HepG2 (cell line): ENCODE measurements at regions of chr7 and their contacts with region 1.

Region 1: GRCh38 chr7:38660427-38661099 is 29.4 kb upstream of the AMPH start:
- DNase-seq: peak; percentile 29
- ATAC-seq: peak; percentile 83
- H3K4me3 ChIP-seq: no peak overlapping the region
- H3K27ac ChIP-seq: no peak overlapping the region
- H3K4me1 ChIP-seq: no peaks in the 10 kb centered on the region
- H3K27me3 ChIP-seq: peaks cover 0 to 2% of the 10 kb centered on the region in 2 experiments; a peak in 2 of 5 replicates
- CTCF ChIP-seq: peak; percentile 75
- EP300 ChIP-seq: no peak
- POLR2A ChIP-seq: no peak
- RAD21 ChIP-seq: no peak

Region 2: DNA sequence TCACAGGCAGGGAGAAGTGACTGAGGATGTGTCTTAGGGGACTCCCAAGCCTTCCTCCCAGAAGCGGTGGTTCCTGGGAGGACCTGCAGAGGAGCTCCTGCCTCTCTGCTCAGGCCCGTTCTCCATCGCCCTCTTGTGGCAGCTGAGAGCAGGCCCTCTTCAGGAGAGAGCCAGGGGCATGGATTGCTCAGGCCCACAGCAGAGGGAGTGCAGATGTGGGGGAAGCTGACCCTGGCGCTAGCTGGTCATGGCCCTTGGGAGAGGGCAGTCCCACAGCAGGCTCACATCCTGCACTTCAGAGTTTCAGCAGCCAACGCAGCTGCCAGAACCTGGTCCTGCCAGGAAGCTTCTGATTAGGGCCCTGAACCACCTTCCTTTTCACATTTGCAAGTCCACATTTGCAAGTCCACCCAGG is 292.4 kb before region 1 on chr7:
- CTCF ChIA-PET with region 1: no interaction called
- POLR2A ChIA-PET with region 1: no interaction called
- in situ Hi-C with region 1: no loop called
- intact Hi-C with region 1: no loop called
- DNase-seq: peak; percentile 63
- ATAC-seq: peak; percentile 95
- H3K4me3 ChIP-seq: no peak overlapping the region
- H3K27ac ChIP-seq: no peak overlapping the region
- H3K4me1 ChIP-seq: no peaks in the 10 kb centered on the region
- H3K27me3 ChIP-seq: no peaks in the 10 kb centered on the region; a peak in 1 of 5 replicates
- CTCF ChIP-seq: peak; percentile 85
- EP300 ChIP-seq: no peak
- POLR2A ChIP-seq: no peak
- RAD21 ChIP-seq: no peak

Region 3: GRCh38 chr7:38398725-38399321 is 261.7 kb before region 1 on chr7:
- CTCF ChIA-PET with region 1: interaction called, 11 read pairs
- POLR2A ChIA-PET with region 1: no interaction called
- in situ Hi-C with region 1: loop called (anchors 25 kb)
- intact Hi-C with region 1: loop called (anchors 1 kb)
- DNase-seq: peak; percentile 21
- ATAC-seq: peak; percentile 69
- H3K4me3 ChIP-seq: no peak overlapping the region
- H3K27ac ChIP-seq: no peak overlapping the region
- H3K4me1 ChIP-seq: no peaks in the 10 kb centered on the region
- H3K27me3 ChIP-seq: no peaks in the 10 kb centered on the region
- CTCF ChIP-seq: peak; percentile 71
- EP300 ChIP-seq: no peak
- POLR2A ChIP-seq: no peak
- RAD21 ChIP-seq: no peak

Region 4: DNA sequence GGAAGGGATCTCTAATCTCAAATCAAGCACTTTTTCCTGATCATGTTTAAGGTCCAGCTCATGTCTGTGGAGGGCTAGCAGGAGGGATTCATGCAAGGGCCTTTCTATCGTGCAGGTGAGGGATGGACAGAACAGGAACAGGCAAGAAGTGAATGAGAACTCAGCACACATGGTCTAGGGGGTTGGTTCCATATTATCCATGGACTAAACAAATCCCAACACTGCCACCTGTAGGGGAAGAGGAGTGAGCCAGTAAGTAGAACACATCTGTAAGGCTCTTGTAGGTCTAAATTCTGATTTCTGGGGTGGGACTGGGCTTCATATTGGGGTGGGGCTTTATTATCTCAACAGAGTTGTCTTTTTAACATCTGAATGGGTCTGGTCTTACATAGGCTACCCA is 249.2 kb before region 1 on chr7:
- CTCF ChIA-PET with region 1: no interaction called
- POLR2A ChIA-PET with region 1: no interaction called
- in situ Hi-C with region 1: loop called (anchors 25 kb)
- intact Hi-C with region 1: no loop called
- DNase-seq: peak; percentile 28
- ATAC-seq: peak; percentile 74
- H3K4me3 ChIP-seq: no peak overlapping the region
- H3K27ac ChIP-seq: no peak overlapping the region
- H3K4me1 ChIP-seq: no peaks in the 10 kb centered on the region
- H3K27me3 ChIP-seq: no peaks in the 10 kb centered on the region
- CTCF ChIP-seq: no peak
- EP300 ChIP-seq: no peak
- POLR2A ChIP-seq: no peak
- RAD21 ChIP-seq: no peak

Region 5: DNA sequence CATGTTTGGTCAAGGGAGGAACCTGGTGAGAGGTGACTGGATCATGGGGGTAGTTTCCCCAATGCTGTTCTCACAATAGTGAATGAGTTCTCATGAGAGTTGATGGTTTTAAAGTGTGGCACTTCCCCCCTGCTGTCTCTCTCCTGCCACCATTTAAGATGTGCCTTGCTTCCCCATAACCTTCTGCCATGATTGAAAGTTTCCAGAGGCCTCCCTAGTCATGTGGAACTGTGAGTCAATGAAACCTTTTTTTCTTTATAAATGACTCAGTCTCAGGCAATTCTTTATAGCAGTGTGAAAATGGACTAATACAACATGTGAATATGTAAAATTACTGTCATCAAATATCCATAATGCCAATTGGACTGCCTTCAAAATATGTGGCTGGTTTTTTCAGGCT is 221.6 kb before region 1 on chr7:
- CTCF ChIA-PET with region 1: no interaction called
- POLR2A ChIA-PET with region 1: no interaction called
- in situ Hi-C with region 1: no loop called
- intact Hi-C with region 1: loop called (anchors 10 kb)
- DNase-seq: no peak
- ATAC-seq: no peak
- H3K4me3 ChIP-seq: no peak overlapping the region
- H3K27ac ChIP-seq: no peak overlapping the region
- H3K4me1 ChIP-seq: no peaks in the 10 kb centered on the region
- H3K27me3 ChIP-seq: no peaks in the 10 kb centered on the region
- CTCF ChIP-seq: no peak
- EP300 ChIP-seq: no peak
- POLR2A ChIP-seq: no peak
- RAD21 ChIP-seq: no peak

Region 6: GRCh38 chr7:38682606-38683005 is 22.0 kb after region 1 on chr7:
- CTCF ChIA-PET with region 1: no interaction called
- POLR2A ChIA-PET with region 1: no interaction called
- in situ Hi-C with region 1: no loop called
- intact Hi-C with region 1: no loop called
- DNase-seq: no peak
- ATAC-seq: no peak
- H3K4me3 ChIP-seq: no peak overlapping the region
- H3K27ac ChIP-seq: no peak overlapping the region
- H3K4me1 ChIP-seq: no peaks in the 10 kb centered on the region
- H3K27me3 ChIP-seq: 0 out of 5 replicates have a peak, but pooled peaks cover 1 to 5% of the 10 kb centered on the region in 2 experiments
- CTCF ChIP-seq: no peak
- EP300 ChIP-seq: no peak
- POLR2A ChIP-seq: no peak
- RAD21 ChIP-seq: no peak

Region 7: GRCh38 chr7:38694326-38694725 is 33.8 kb after region 1 on chr7:
- CTCF ChIA-PET with region 1: no interaction called
- POLR2A ChIA-PET with region 1: no interaction called
- in situ Hi-C with region 1: no loop called
- intact Hi-C with region 1: no loop called
- DNase-seq: no peak
- ATAC-seq: no peak
- H3K4me3 ChIP-seq: no peak overlapping the region
- H3K27ac ChIP-seq: no peak overlapping the region
- H3K4me1 ChIP-seq: no peaks in the 10 kb centered on the region
- H3K27me3 ChIP-seq: no peaks in the 10 kb centered on the region; a peak in 1 of 5 replicates
- CTCF ChIP-seq: no peak
- EP300 ChIP-seq: no peak
- POLR2A ChIP-seq: no peak
- RAD21 ChIP-seq: no peak